Naive thymus-derived CD4-positive, alpha-beta T cell (primary cell): ENCODE measurements at regions of chr21 and their contacts with region 1.

Region 1: GRCh38 chr21:25421327-25422028 is 185.8 kb downstream of the MRPL39 start:
- DNase-seq: peak in 8 of 9 donors; percentile 18 to 50 (median 40)
- ATAC-seq: peak; percentile 91
- H3K4me3 ChIP-seq: no peak overlapping the region
- H3K4me3 Mint-ChIP-seq: peak overlapping the region in 6 of 10 donors; percentile 7 to 88 (median 56)
- H3K27ac ChIP-seq: no peak overlapping the region
- H3K27ac Mint-ChIP-seq: peak overlapping the region in 7 of 9 donors; percentile 1 to 84 (median 41)
- H3K4me1 ChIP-seq: peaks cover 6 to 7% of the 10 kb centered on the region in 2 donors
- H3K4me1 Mint-ChIP-seq: peaks cover 4 to 25% (median 12%) of the 10 kb centered on the region in 7 donors
- H3K27me3 ChIP-seq: no peaks in the 10 kb centered on the region
- H3K27me3 Mint-ChIP-seq: peaks cover 0 to 6% (median 0%) of the 10 kb centered on the region in 5 donors

Region 2: DNA sequence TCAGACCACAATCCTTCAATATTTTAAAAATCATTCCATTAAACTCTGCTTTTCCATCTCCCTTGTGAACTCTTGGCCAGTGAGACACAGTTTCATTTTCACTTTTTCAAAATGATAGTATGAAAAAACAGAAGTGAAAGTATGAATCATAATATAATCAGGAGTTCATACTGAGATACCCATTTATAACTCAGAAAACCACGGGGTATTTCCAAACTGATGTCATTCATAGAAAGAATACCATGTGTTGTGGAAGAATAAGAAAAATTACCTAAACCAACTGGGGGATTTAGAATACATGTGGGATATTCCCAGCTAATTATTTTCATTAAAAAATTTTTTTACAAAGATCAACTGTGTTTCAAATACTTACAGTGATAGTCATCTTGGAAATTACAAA is 35.9 kb after region 1 on chr21:
- CTCF ChIA-PET with region 1: no interaction called
- POLR2A ChIA-PET with region 1: no interaction called
- intact Hi-C with region 1: loop called in 1 of 2 experiments (anchors 2 kb)
- DNase-seq: peak in 6 of 9 donors; percentile 11 to 49 (median 34)
- ATAC-seq: peak; percentile 95
- H3K4me3 ChIP-seq: peak overlapping the region; percentile 1
- H3K4me3 Mint-ChIP-seq: peak overlapping the region; percentile 65 to 91 (median 82)
- H3K27ac ChIP-seq: peak overlapping the region; percentile 40
- H3K27ac Mint-ChIP-seq: peak overlapping the region; percentile 81 to 91 (median 86)
- H3K4me1 ChIP-seq: peaks cover 0 to 5% of the 10 kb centered on the region in 2 donors
- H3K4me1 Mint-ChIP-seq: peaks cover 5 to 39% (median 24%) of the 10 kb centered on the region in 7 donors
- H3K27me3 ChIP-seq: no peaks in the 10 kb centered on the region
- H3K27me3 Mint-ChIP-seq: no peaks in the 10 kb centered on the region

Region 3: DNA sequence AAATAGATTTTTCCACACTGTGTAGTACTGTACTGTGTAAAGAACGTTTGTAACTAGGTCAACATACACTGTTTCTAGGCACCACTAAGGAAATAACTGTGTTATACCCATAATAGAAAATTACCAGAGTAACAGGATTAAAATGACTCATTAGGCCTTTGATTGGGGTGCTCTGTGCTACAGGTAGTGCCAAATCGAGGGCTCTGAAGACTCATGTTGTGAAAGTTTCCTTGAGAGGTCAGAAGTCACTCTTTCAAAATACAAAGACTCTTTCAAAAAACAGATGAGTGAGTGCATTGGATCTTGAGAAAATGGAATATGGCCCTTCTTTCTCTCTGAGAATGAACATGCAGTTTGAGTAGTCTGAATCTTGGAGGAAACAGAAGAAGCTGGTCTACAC is 42.8 kb after region 1 on chr21:
- CTCF ChIA-PET with region 1: no interaction called
- POLR2A ChIA-PET with region 1: no interaction called
- intact Hi-C with region 1: loop called in 1 of 2 experiments (anchors 2 kb)
- DNase-seq: no peak
- ATAC-seq: peak; percentile 75
- H3K4me3 ChIP-seq: no peak overlapping the region
- H3K4me3 Mint-ChIP-seq: peak overlapping the region in 1 of 10 donors; percentile 8
- H3K27ac ChIP-seq: no peak overlapping the region
- H3K27ac Mint-ChIP-seq: peak overlapping the region in 2 of 9 donors; percentile 13 to 83
- H3K4me1 ChIP-seq: no peaks in the 10 kb centered on the region
- H3K4me1 Mint-ChIP-seq: peaks cover 0 to 47% (median 8%) of the 10 kb centered on the region in 7 donors
- H3K27me3 ChIP-seq: no peaks in the 10 kb centered on the region
- H3K27me3 Mint-ChIP-seq: no peaks in the 10 kb centered on the region

Region 4: GRCh38 chr21:25501996-25502665 is 80.7 kb after region 1 on chr21:
- CTCF ChIA-PET with region 1: no interaction called
- POLR2A ChIA-PET with region 1: no interaction called
- intact Hi-C with region 1: loop called in 1 of 2 experiments (anchors 5 kb)
- DNase-seq: peak in 1 of 9 donors; percentile 44
- ATAC-seq: peak; percentile 70
- H3K4me3 ChIP-seq: no peak overlapping the region
- H3K4me3 Mint-ChIP-seq: no peak overlapping the region
- H3K27ac ChIP-seq: no peak overlapping the region
- H3K27ac Mint-ChIP-seq: peak overlapping the region in 1 of 9 donors; percentile 66
- H3K4me1 ChIP-seq: no peaks in the 10 kb centered on the region
- H3K4me1 Mint-ChIP-seq: peaks cover 0 to 17% (median 7%) of the 10 kb centered on the region in 7 donors
- H3K27me3 ChIP-seq: no peaks in the 10 kb centered on the region
- H3K27me3 Mint-ChIP-seq: no peaks in the 10 kb centered on the region

Region 5: GRCh38 chr21:25639551-25640201 is 218.2 kb after region 1 on chr21:
- CTCF ChIA-PET with region 1: no interaction called
- POLR2A ChIA-PET with region 1: no interaction called
- intact Hi-C with region 1: loop called in 1 of 2 experiments (anchors 2 kb)
- DNase-seq: peak; percentile 19 to 54 (median 38)
- ATAC-seq: peak; percentile 89
- H3K4me3 ChIP-seq: peak overlapping the region; percentile 68
- H3K4me3 Mint-ChIP-seq: peak overlapping the region; percentile 74 to 88 (median 82)
- H3K27ac ChIP-seq: peak overlapping the region; percentile 9
- H3K27ac Mint-ChIP-seq: no peak overlapping the region
- H3K4me1 ChIP-seq: peaks cover 0 to 10% of the 10 kb centered on the region in 2 donors
- H3K4me1 Mint-ChIP-seq: peaks cover 14 to 22% (median 17%) of the 10 kb centered on the region in 7 donors
- H3K27me3 ChIP-seq: no peaks in the 10 kb centered on the region
- H3K27me3 Mint-ChIP-seq: peaks cover 20 to 47% (median 38%) of the 10 kb centered on the region in 5 donors

Region 6: GRCh38 chr21:25670726-25671125 is 249.2 kb after region 1 on chr21:
- CTCF ChIA-PET with region 1: no interaction called
- POLR2A ChIA-PET with region 1: no interaction called
- intact Hi-C with region 1: no loop called
- DNase-seq: no peak
- ATAC-seq: no peak
- H3K4me3 ChIP-seq: no peak overlapping the region
- H3K4me3 Mint-ChIP-seq: no peak overlapping the region
- H3K27ac ChIP-seq: no peak overlapping the region
- H3K27ac Mint-ChIP-seq: no peak overlapping the region
- H3K4me1 ChIP-seq: no peaks in the 10 kb centered on the region
- H3K4me1 Mint-ChIP-seq: no peaks in the 10 kb centered on the region
- H3K27me3 ChIP-seq: no peaks in the 10 kb centered on the region
- H3K27me3 Mint-ChIP-seq: peaks cover 0 to 27% (median 7%) of the 10 kb centered on the region in 5 donors

Region 7: DNA sequence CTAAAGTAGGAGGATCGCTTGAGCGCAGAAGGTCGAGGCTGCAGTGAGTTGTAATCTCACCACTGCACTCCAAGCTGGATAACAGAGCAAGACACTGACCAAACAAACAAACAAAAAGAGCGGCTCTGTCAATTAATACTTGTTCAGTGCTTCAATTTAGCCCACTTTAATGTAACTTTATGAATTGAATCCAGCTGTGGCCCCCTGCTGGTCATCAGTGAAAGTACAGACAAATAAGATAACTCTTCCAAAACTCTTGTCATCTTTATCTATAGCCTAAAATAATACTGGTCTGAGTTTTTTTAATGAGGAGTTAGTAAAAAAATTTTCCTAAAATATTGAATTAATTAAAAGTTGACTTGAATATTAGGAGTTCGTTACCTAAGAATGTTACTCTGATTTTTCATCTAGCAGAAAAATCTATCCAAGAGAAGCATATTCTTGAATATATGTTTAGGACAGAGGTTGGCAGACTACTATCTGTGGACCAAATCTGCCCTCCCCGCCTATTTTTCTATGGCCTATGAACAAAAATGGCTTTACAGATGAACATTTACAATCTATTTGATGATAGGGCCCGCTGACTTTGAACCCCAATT is 287.1 kb after region 1 on chr21:
- CTCF ChIA-PET with region 1: no interaction called
- POLR2A ChIA-PET with region 1: no interaction called
- intact Hi-C with region 1: loop called in 1 of 2 experiments (anchors 1 kb)
- DNase-seq: peak in 8 of 9 donors; percentile 17 to 56 (median 39)
- ATAC-seq: peak; percentile 67
- H3K4me3 ChIP-seq: no peak overlapping the region
- H3K4me3 Mint-ChIP-seq: no peak overlapping the region
- H3K27ac ChIP-seq: no peak overlapping the region
- H3K27ac Mint-ChIP-seq: no peak overlapping the region
- H3K4me1 ChIP-seq: no peaks in the 10 kb centered on the region
- H3K4me1 Mint-ChIP-seq: peaks cover 0 to 5% (median 0%) of the 10 kb centered on the region in 7 donors
- H3K27me3 ChIP-seq: no peaks in the 10 kb centered on the region
- H3K27me3 Mint-ChIP-seq: no peaks in the 10 kb centered on the region